K562 (cell line): ENCODE measurements at regions of chr12 and their contacts with region 1.

Region 1: GRCh38 chr12:32365473-32366064 is 33.8 kb upstream of the FGD4 start:
- DNase-seq: peak; percentile 60 to 75 (median 70)
- ATAC-seq: peak; percentile 90
- H3K4me3 ChIP-seq: no peak overlapping the region
- H3K27ac ChIP-seq: no peak overlapping the region
- H3K4me1 ChIP-seq: no peaks in the 10 kb centered on the region
- H3K27me3 ChIP-seq: no peaks in the 10 kb centered on the region; a peak in 1 of 5 replicates
- CTCF ChIP-seq: peak; percentile 75 to 82 (median 78)
- EP300 ChIP-seq: no peak
- POLR2A ChIP-seq: no peak
- RAD21 ChIP-seq: peak; percentile 83 to 89

Region 2: DNA sequence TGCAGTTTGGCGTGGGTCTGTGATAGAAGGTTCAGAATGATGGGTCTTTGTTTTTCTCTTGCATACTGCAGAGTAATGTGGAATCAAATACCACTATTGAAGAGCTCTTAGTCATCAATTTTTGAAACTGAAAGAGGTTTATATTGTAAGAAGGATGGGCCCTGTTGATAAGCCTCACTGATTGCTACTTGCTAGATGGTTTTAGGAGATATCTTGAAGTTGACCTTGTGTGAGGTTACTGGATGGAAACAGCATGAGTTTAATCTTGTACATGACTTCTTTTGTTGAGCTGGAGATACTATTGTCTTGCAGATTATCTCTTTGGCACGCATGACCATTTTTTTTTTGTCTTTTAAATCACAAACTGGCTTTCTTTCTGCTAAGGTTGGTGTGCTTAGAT is 245.2 kb before region 1 on chr12:
- CTCF ChIA-PET with region 1: no interaction called
- POLR2A ChIA-PET with region 1: no interaction called
- in situ Hi-C with region 1: no loop called
- intact Hi-C with region 1: no loop called
- DNase-seq: no peak
- ATAC-seq: no peak
- H3K4me3 ChIP-seq: no peak overlapping the region
- H3K27ac ChIP-seq: no peak overlapping the region
- H3K4me1 ChIP-seq: peaks cover 6% of the 10 kb centered on the region in 2 experiments; a peak in 4 of 5 replicates
- H3K27me3 ChIP-seq: no peaks in the 10 kb centered on the region
- CTCF ChIP-seq: no peak
- EP300 ChIP-seq: no peak
- POLR2A ChIP-seq: no peak
- RAD21 ChIP-seq: no peak

Region 3: DNA sequence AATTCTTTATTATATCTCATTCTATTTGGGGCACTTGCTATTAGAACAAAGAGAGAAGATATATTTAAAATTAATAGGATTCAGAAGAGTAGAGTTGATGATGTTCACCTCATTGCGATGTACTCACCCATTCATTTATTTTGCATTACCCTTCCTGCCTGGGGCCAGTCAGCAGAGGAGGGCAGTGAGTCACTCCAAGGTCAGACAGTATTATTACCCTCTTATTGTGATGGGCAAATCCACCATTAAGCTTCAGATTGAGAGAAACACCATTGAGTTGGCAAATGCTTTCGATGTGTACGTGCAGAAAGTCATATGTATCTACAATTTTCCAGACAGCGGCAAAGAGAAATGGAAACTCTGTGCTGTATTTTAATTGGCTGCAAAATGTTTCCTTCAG is 124.7 kb before region 1 on chr12:
- CTCF ChIA-PET with region 1: no interaction called
- POLR2A ChIA-PET with region 1: no interaction called
- in situ Hi-C with region 1: no loop called
- intact Hi-C with region 1: no loop called
- DNase-seq: no peak
- ATAC-seq: no peak
- H3K4me3 ChIP-seq: no peak overlapping the region
- H3K27ac ChIP-seq: no peak overlapping the region
- H3K4me1 ChIP-seq: no peaks in the 10 kb centered on the region
- H3K27me3 ChIP-seq: no peaks in the 10 kb centered on the region
- CTCF ChIP-seq: no peak
- EP300 ChIP-seq: no peak
- POLR2A ChIP-seq: no peak
- RAD21 ChIP-seq: no peak

Region 4: DNA sequence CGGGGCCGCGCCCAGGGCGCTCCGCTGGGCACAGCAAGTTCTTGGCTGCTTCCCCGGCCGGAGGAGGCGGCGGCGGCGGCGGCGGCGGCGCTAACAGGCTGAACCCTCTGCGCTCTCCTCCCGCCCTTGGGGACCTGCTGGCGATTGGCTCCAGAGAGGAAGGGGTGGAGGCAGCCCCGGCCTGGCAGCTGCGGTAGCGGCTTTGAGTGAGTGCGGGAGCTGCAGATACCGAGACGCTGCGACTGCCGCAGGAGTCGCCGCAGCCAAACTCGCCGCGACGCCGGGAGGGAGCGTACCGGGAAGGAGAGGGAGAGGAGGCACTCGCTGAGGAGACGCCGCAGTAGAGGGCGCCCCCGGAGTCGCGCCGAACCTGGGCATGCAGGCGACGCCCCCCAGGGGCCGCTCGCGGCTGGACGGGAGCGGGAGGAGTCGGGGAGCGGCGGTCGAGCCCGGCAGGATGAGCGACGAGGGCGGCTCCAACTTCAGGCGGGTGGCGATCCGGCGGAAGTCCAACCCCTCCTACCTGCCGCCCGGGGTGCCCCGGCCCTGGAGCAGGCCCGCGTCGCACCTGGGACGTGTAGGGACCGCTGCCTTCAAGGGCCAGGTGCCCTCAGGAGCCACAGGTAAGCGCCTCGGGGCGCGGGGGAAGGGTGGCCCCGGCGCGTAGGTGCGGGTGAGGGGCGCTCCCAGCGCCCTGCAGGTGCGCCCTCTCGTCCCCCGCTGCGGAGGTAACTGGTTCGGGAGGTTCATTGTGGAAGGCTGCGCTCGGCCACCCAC is 34.0 kb after region 1 on chr12 and contains the start of gene FGD4:
- CTCF ChIA-PET with region 1: no interaction called
- POLR2A ChIA-PET with region 1: no interaction called
- in situ Hi-C with region 1: no loop called
- intact Hi-C with region 1: loop called (anchors 5 kb)
- DNase-seq: peak; percentile 68 to 83 (median 73)
- ATAC-seq: peak; percentile 95
- H3K4me3 ChIP-seq: peak within 1 kb of the TSS; percentile 57
- H3K27ac ChIP-seq: no peak within 1 kb of the TSS
- H3K4me1 ChIP-seq: peaks cover 4 to 14% of the 10 kb centered on the region in 2 experiments; a peak in 4 of 5 replicates
- H3K27me3 ChIP-seq: peaks cover 2 to 23% of the 10 kb centered on the region in 2 experiments; a peak in 4 of 5 replicates
- CTCF ChIP-seq: peak; percentile 57 to 98 (median 74)
- EP300 ChIP-seq: no peak
- POLR2A ChIP-seq: no peak
- RAD21 ChIP-seq: peak; percentile 43 to 63; a peak in 2 of 4 replicates
- polyA plus RNA-seq, gene FGD4: 0.08 to 0.10 TPM

Region 5: GRCh38 chr12:32419520-32419960 is 54.0 kb after region 1 on chr12:
- CTCF ChIA-PET with region 1: no interaction called
- POLR2A ChIA-PET with region 1: no interaction called
- in situ Hi-C with region 1: no loop called
- intact Hi-C with region 1: no loop called
- DNase-seq: peak in 1 of 4 experiments; percentile 24
- ATAC-seq: peak; percentile 82
- H3K4me3 ChIP-seq: no peak overlapping the region
- H3K27ac ChIP-seq: no peak overlapping the region; the same call in 2 of the 3 replicates
- H3K4me1 ChIP-seq: no peaks in the 10 kb centered on the region; a peak in 1 of 5 replicates
- H3K27me3 ChIP-seq: no peaks in the 10 kb centered on the region
- CTCF ChIP-seq: no peak
- EP300 ChIP-seq: no peak
- POLR2A ChIP-seq: no peak
- RAD21 ChIP-seq: no peak

Region 6: DNA sequence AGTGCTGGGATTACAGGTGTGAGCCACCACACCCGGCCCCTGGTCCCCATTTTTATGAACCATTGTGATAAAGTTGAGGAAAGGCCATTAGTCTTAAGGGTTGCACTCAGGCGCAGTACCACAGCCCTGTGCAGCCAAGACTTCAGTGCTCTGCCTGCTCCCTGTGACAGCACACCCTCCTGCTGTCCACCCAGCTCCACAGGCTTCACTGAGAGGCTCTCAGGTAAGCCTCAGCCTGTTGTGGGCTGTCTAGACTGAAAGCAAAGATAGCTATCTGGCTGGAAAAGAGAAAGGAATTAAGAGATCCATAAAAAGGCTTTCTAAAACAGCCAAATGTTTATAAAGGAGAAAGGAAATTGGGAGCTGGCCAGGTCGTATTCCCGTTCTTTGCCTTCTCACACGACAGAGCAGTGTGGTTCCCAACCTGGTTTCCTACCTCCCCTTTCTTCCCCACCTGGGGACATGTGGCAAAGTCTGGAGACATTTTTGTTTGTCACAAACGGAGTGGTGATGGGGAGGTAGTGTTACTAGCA is 294.4 kb after region 1 on chr12:
- CTCF ChIA-PET with region 1: no interaction called
- POLR2A ChIA-PET with region 1: no interaction called
- in situ Hi-C with region 1: loop called (anchors 10 kb)
- intact Hi-C with region 1: loop called (anchors 1 kb)
- DNase-seq: no peak
- ATAC-seq: peak; percentile 33; the same call in 2 of the 3 replicates
- H3K4me3 ChIP-seq: no peak overlapping the region
- H3K27ac ChIP-seq: no peak overlapping the region
- H3K4me1 ChIP-seq: no peaks in the 10 kb centered on the region
- H3K27me3 ChIP-seq: peaks cover 10 to 24% of the 10 kb centered on the region in 2 experiments; a peak in 3 of 5 replicates
- CTCF ChIP-seq: no peak
- EP300 ChIP-seq: no peak
- POLR2A ChIP-seq: no peak
- RAD21 ChIP-seq: no peak

Region 7: DNA sequence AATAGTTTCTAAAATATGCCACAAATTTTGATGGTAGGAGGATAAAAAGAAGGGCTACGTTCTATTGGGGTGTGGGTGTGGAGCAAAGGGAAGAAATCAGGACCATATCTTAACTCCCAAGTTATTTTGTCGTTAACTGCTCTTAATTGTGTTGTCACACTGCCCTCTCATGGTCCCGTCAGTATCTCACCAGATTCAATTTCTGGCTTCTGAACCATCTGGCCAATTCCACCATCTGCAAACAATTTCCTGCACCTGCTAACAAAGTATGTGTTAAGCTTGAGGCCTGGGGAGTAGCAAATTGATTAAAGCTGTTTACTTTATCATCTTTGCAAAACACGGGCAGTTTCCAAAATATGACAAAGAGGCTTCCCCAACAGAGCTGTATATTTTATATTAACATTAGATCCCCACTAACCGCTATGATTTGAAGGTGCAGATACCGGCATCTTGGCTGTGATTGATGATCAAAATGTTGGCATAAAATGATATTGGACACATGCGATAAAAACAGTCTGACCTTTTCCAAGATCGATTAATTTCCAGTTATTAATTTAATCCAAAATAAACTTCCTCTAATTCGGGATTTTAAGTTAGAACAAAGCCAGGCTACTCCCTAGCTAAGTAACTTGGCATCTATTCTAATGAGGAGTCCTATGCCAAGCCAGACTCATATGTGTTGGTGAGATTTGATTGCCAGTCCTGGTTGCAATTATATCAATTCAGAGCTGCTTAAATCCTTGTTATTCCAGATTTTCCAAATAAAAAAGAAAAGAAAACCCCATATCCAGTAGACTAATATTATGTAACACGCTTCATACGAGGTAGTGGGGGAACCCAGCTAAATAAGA is 306.6 kb after region 1 on chr12:
- CTCF ChIA-PET with region 1: no interaction called
- POLR2A ChIA-PET with region 1: no interaction called
- in situ Hi-C with region 1: no loop called
- intact Hi-C with region 1: loop called (anchors 5 kb)
- DNase-seq: peak; percentile 41 to 53 (median 42)
- ATAC-seq: peak; percentile 83
- H3K4me3 ChIP-seq: no peak overlapping the region
- H3K27ac ChIP-seq: no peak overlapping the region
- H3K4me1 ChIP-seq: no peaks in the 10 kb centered on the region; a peak in 1 of 5 replicates
- H3K27me3 ChIP-seq: no peaks in the 10 kb centered on the region
- CTCF ChIP-seq: peak; percentile 46 to 66 (median 49); a peak in 5 of 6 replicates
- EP300 ChIP-seq: no peak
- POLR2A ChIP-seq: no peak
- RAD21 ChIP-seq: peak; percentile 44 to 74

Region 8: DNA sequence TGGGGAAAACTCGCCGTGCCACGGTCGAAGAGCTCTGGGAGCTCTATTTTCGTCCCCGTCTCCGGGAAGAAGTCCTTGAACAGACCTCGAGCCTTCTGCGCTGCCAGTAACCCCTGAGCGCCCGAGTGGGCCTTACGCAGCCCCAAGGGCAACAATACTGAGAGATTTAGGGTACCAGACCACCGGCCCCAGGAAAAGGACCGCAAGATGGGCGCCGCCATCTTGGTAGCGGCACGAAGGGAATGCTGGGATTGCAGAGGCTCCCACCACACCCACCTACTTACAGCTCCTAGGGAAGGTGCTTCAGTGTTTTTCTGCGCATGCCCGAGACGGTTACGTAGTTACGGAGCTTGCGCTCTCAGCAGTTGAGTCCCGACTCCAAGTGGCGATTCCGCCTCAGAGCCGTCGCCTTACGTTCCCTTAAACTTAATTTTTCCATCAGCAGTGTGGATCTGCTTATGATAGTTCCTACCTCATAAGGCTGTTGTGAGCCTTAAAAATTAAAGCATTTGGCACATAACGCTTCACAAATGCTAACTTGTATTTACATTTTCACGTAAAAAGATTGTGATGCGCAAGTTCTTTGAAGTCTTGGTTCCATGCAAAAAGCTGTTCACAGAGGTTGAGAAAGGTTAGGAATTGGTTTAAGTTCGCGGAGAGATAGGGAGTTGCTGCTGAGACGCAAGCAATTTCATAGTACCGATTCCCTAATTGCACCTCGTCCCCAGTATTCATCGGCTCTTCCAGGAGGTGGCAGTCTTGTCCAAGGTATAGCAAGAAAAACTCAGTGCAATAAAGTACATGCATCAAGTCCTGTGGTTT is 390.3 kb after region 1 on chr12 and contains the start of gene YARS2:
- CTCF ChIA-PET with region 1: no interaction called
- POLR2A ChIA-PET with region 1: interaction called, 3 read pairs
- in situ Hi-C with region 1: no loop called
- intact Hi-C with region 1: loop called (anchors 1 kb)
- DNase-seq: peak; percentile 83 to 98 (median 88)
- ATAC-seq: peak; percentile 95
- H3K4me3 ChIP-seq: peak within 1 kb of the TSS; percentile 73
- H3K27ac ChIP-seq: peak within 1 kb of the TSS; percentile 69
- H3K4me1 ChIP-seq: peaks cover 4 to 5% of the 10 kb centered on the region in 2 experiments; a peak in 1 of 5 replicates
- H3K27me3 ChIP-seq: no peaks in the 10 kb centered on the region
- CTCF ChIP-seq: peak; percentile 74 to 90 (median 89)
- EP300 ChIP-seq: no peak
- POLR2A ChIP-seq: peak; percentile 97
- RAD21 ChIP-seq: peak; percentile 95 to 97
- polyA plus RNA-seq, gene YARS2: 15.2 to 18.4 TPM